Activated B cell treated with CpG ODN at 0.5 μM for 24 hours (primary cell): ENCODE measurements at regions of chr14 and their contacts with region 1.

Region 1: GRCh38 chr14:95515596-95516552 is 576 bp downstream of the SYNE3 start:
- DNase-seq: peak; percentile 89
- ATAC-seq: peak; percentile 85
- H3K4me3 Mint-ChIP-seq: peak overlapping the region; percentile 94
- H3K27ac Mint-ChIP-seq: peak overlapping the region; percentile 93
- H3K4me1 Mint-ChIP-seq: peaks cover 79% of the 10 kb centered on the region
- H3K27me3 Mint-ChIP-seq: no peaks in the 10 kb centered on the region
- CTCF ChIP-seq: no peak

Region 2: DNA sequence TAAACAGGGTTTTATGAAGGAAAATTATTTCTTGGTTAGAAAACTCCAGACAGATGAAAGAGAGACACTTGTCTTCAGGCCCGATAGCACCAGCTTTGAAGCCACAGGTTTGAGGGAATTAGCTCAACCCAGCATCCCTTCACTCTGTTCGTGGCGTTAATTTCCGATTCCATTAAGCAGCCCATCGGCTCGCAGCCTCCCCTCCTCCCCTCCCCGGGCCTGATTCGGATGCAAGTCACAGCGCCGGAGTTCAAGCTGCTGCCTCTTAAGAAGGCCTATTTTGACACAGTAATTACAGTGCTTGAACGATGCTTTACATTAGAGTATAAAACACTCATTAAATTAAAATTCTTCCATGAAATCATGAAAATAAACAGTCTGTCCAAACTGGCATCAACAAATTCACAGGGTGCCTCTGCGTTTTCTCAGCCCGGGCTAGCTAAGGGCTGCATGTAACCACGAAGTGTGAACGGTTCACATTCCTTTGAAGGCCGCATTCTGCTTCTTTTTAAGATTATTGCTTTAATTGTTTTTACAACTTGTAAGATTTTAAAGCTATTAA is 504.3 kb before region 1 on chr14:
- CTCF ChIA-PET with region 1: no interaction called
- POLR2A ChIA-PET with region 1: no interaction called
- intact Hi-C with region 1: no loop called
- DNase-seq: no peak
- ATAC-seq: no peak
- H3K4me3 Mint-ChIP-seq: no peak overlapping the region
- H3K27ac Mint-ChIP-seq: no peak overlapping the region
- H3K4me1 Mint-ChIP-seq: no peaks in the 10 kb centered on the region
- H3K27me3 Mint-ChIP-seq: peaks cover 31% of the 10 kb centered on the region
- CTCF ChIP-seq: no peak

Region 3: DNA sequence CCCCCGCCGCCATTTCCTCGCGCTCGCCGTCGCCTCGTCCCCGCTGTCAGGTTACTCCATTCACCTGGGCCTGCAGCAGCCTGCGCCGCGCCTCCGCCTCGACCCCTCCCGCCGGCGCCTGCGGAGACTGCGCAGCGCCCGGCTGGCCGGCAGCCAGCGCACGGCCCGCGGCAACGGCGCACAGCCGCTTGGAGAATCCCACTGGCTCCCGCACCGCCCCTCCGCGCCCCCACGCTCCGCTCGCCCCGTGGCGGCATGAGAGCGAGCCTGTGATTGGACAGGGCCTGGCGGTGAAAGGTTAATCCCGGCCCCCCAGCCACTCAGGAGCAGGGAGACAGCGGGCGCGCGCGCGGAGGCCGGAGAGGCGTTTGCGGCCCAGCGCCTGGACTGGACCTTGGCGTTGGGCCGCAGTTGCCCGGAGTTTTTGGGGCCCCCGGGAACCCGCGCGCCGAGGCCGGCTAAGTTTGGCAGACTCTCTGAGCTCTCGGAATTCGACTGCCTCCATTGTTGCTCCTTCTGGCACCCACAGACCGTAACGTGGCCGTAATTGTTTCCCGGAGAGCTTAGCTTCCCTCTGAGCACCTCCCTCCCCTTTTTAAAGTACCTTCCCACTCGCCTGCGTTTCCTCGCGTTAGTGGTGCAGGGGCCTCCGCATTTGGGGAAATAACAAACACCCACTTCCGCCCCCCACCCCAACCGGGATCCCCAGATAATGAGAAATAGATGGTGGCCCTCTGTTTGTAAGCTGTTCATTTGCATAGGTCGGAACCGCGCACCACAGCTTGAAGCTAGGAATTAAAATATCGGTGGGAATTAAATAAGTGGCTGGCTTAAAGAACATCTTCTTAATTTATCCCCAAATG is 358.3 kb before region 1 on chr14 and contains the start of gene DICER1:
- CTCF ChIA-PET with region 1: no interaction called
- POLR2A ChIA-PET with region 1: interaction called, 3 read pairs
- intact Hi-C with region 1: loop called (anchors 5 kb)
- DNase-seq: peak; percentile 96
- ATAC-seq: peak; percentile 87
- H3K4me3 Mint-ChIP-seq: peak within 1 kb of the TSS; percentile 97
- H3K27ac Mint-ChIP-seq: peak within 1 kb of the TSS; percentile 100
- H3K4me1 Mint-ChIP-seq: peaks cover 45% of the 10 kb centered on the region
- H3K27me3 Mint-ChIP-seq: no peaks in the 10 kb centered on the region
- CTCF ChIP-seq: no peak
- total RNA-seq, gene DICER1: 67.3 and 69.6 TPM in 2 replicates

Region 4: GRCh38 chr14:95442633-95443021 is 73.2 kb before region 1 on chr14:
- CTCF ChIA-PET with region 1: interaction called, 19 read pairs
- POLR2A ChIA-PET with region 1: interaction called, 7 read pairs
- intact Hi-C with region 1: no loop called
- DNase-seq: peak; percentile 55
- ATAC-seq: peak; percentile 91
- H3K4me3 Mint-ChIP-seq: no peak overlapping the region
- H3K27ac Mint-ChIP-seq: peak overlapping the region; percentile 78
- H3K4me1 Mint-ChIP-seq: peaks cover 34% of the 10 kb centered on the region
- H3K27me3 Mint-ChIP-seq: no peaks in the 10 kb centered on the region
- CTCF ChIP-seq: no peak

Region 5: GRCh38 chr14:95480109-95480886 is 35.6 kb before region 1 on chr14:
- CTCF ChIA-PET with region 1: no interaction called
- POLR2A ChIA-PET with region 1: interaction called, 14 read pairs
- intact Hi-C with region 1: loop called (anchors 1 kb)
- DNase-seq: no peak
- ATAC-seq: peak; percentile 85
- H3K4me3 Mint-ChIP-seq: peak overlapping the region; percentile 52
- H3K27ac Mint-ChIP-seq: peak overlapping the region; percentile 90
- H3K4me1 Mint-ChIP-seq: peaks cover 53% of the 10 kb centered on the region
- H3K27me3 Mint-ChIP-seq: no peaks in the 10 kb centered on the region
- CTCF ChIP-seq: no peak

Region 6: GRCh38 chr14:95527387-95528002 is 11.6 kb after region 1 on chr14:
- CTCF ChIA-PET with region 1: interaction called, 27 read pairs
- POLR2A ChIA-PET with region 1: interaction called, 52 read pairs
- intact Hi-C with region 1: loop called (anchors 1 kb)
- DNase-seq: no peak
- ATAC-seq: peak; percentile 85
- H3K4me3 Mint-ChIP-seq: no peak overlapping the region
- H3K27ac Mint-ChIP-seq: peak overlapping the region; percentile 65
- H3K4me1 Mint-ChIP-seq: peaks cover 43% of the 10 kb centered on the region
- H3K27me3 Mint-ChIP-seq: no peaks in the 10 kb centered on the region
- CTCF ChIP-seq: peak; percentile 96